Heart right ventricle (tissue), 16 donors: ENCODE measurements at regions of chr4 and their contacts with region 1.

Region 1: DNA sequence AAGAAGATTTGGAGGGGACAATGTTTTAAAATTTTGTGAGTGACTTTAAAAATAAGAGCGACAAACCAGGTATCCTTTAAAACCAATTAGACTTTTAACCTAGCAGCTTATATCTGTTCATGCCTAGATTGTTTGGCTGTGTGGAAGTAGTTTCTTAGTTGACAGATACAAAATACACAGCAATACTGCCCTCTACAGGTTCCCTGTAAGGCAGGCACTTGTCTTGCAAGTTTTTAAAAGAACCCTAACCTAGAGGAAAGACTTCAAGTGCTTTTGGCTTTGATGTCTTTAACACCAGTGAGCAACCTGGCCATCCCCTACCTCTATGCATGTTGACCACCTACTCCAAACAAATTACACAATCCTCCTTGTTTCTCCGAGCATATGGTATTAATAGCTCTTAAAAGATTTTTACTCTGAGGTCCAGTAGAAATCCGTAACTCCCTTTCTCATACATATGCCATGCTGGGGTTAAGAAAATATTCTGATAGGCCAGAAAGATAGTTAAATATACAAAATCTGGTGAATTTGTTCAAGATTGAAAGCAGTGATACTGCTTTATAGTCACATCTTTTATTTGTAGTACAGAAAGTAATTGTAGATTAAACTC is 273.0 kb downstream of the ARHGAP24 start:
- DNase-seq: peak in 1 of 2 donors; percentile 62
- ATAC-seq: peak; percentile 59 to 87 (median 80)
- H3K4me3 ChIP-seq: no peak overlapping the region
- H3K27ac ChIP-seq: no peak overlapping the region
- H3K4me1 ChIP-seq: peaks cover 0 to 34% (median 5%) of the 10 kb centered on the region in 9 donors
- H3K27me3 ChIP-seq: no peaks in the 10 kb centered on the region
- CTCF ChIP-seq: peak; percentile 82 to 93 (median 88)

Region 2: DNA sequence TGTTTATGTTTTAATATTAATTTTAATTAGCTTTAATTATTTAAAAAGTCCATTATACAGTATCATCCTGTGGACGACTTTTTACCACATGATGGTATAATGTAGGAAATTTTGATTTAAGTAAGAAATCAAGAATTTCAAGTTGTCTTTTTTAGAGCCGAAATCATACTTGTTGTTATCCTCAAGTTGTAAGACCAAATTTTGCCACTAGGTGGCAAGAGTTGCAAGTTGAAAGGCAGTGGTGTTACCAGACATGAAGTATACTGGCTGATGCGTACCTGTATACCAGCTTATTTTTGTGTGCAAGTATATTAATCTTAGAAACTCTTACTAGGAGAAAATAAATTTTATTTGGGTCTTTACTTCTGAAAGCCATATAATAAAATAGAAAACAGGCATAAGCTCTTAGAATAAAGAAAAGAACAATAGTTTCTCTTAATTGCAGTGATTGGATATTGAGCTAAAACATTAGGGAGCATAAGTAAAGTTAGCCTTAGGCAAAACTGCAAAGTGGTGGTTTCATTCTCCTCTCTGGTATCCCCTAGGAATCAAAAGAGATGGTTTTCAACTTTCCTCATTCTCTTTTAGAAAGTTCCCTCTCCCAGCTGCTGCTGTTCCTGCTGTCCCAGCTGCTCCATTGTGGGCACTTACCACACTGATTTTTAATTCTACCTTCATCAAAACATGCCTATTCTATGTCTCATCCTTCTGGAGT is 663.5 kb before region 1 on chr4:
- intact Hi-C with region 1: loop called in 7 of 10 experiments (anchors 2 to 10 kb)
- DNase-seq: peak in 1 of 2 donors; percentile 55
- ATAC-seq: peak in 4 of 8 donors; percentile 48 to 73 (median 59)
- H3K4me3 ChIP-seq: no peak overlapping the region
- H3K27ac ChIP-seq: no peak overlapping the region
- H3K4me1 ChIP-seq: peaks cover 0 to 6% (median 0%) of the 10 kb centered on the region in 9 donors
- H3K27me3 ChIP-seq: peaks cover 0 to 3% (median 0%) of the 10 kb centered on the region in 7 donors
- CTCF ChIP-seq: peak; percentile 52 to 85 (median 72)

Region 3: DNA sequence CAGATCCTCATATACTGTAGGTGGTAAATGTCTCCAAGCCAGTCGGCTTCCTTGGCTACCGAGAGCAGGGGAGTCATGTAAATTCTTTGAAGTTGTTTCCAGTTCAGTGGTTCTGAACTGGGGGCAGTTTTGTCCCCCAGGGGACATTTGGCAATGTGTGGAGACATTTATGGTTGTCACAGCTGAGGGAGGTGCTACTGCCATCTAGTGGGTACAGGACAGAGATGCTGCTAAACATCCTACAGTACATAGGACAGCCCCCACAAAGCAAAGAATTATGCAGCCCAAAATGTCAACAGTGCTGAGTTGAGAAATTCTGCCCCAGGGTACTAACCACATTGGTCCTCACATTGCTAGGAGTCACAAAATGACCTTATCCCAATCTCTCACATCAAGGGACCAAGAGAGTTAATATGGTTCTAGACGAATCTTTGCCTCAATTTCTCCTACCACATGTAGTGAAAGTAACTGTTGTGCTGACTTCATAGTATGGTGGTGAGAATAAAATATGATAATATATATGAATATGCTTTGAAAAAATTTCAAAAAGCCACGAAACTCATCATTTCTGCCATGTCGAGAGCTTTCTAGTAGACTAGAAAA is 377.5 kb before region 1 on chr4:
- intact Hi-C with region 1: loop called in 6 of 10 experiments (anchors 5 to 10 kb)
- DNase-seq: peak in 1 of 2 donors; percentile 49
- ATAC-seq: peak in 7 of 8 donors; percentile 57 to 86 (median 67)
- H3K4me3 ChIP-seq: no peak overlapping the region
- H3K27ac ChIP-seq: no peak overlapping the region
- H3K4me1 ChIP-seq: peaks cover 0 to 32% (median 13%) of the 10 kb centered on the region in 9 donors
- H3K27me3 ChIP-seq: no peaks in the 10 kb centered on the region
- CTCF ChIP-seq: peak; percentile 46 to 79 (median 71)

Region 4: GRCh38 chr4:85474818-85475630 is 273.0 kb before region 1 on chr4 and contains the start of gene ARHGAP24:
- intact Hi-C with region 1: loop called in 3 of 10 experiments (anchors 5 to 10 kb)
- DNase-seq: peak; percentile 82 to 83
- ATAC-seq: peak; percentile 95 to 99 (median 98)
- H3K4me3 ChIP-seq: peak within 1 kb of the TSS; percentile 26 to 82 (median 69)
- H3K27ac ChIP-seq: peak within 1 kb of the TSS; percentile 30 to 87 (median 84)
- H3K4me1 ChIP-seq: peaks cover 0 to 25% (median 8%) of the 10 kb centered on the region in 9 donors
- H3K27me3 ChIP-seq: no peaks in the 10 kb centered on the region
- CTCF ChIP-seq: peak in 2 of 9 donors; percentile 26 to 27
- total RNA-seq, gene ARHGAP24: 13.7 to 35.5 (median 25.0) TPM

Region 5: GRCh38 chr4:85498068-85498733 is 249.8 kb before region 1 on chr4:
- intact Hi-C with region 1: loop called in 2 of 10 experiments (anchors 5 to 10 kb)
- DNase-seq: no peak
- ATAC-seq: peak; percentile 60 to 88 (median 80)
- H3K4me3 ChIP-seq: no peak overlapping the region
- H3K27ac ChIP-seq: peak overlapping the region in 8 of 10 donors; percentile 34 to 77 (median 60)
- H3K4me1 ChIP-seq: peaks cover 8 to 52% (median 34%) of the 10 kb centered on the region in 9 donors
- H3K27me3 ChIP-seq: no peaks in the 10 kb centered on the region
- CTCF ChIP-seq: no peak

Region 6: DNA sequence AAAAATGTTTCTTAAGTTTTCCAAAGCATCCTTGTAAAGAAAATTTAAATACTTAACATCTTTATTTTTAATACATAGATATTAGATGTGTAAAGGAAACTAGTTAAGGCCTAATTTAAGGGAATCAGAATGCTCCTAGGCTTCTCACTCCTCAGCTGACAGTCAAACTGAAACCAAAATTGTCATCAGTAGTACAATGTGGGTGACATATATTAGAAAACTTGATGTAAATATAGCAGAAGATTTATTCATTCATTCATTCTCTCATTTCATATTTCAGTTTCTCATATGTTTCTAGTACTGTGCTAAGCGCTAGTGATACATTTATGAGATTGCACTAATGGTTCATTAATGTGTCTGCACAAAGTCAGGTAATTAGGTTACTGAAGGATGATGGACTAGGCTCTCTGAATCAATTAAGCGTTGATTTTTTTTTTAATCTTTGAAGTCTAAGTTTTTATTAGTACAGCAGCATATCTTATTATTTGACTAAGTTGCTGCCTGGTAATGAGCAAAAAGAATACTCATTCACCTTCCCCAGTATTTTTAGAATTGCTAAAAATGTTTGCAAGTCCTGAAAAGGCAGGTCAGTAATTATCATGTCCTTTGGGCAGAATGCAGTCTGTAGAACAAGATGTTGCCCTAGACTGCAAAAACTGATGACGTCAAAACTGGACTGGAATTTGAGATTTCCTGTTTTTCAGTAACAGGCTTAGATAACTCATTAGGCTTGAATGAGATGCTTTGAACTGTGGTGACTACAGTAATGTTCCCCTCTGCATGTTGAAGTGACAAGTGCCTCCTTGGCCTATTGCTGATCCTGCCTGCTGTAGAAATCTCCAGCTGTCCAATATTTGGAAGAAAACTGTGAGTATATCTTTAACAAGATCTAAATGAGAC is 144.3 kb before region 1 on chr4:
- intact Hi-C with region 1: loop called in 2 of 10 experiments (anchors 10 kb)
- DNase-seq: no peak
- ATAC-seq: peak in 5 of 8 donors; percentile 29 to 85 (median 51)
- H3K4me3 ChIP-seq: no peak overlapping the region
- H3K27ac ChIP-seq: peak overlapping the region in 1 of 10 donors; percentile 5
- H3K4me1 ChIP-seq: peaks cover 0 to 26% (median 11%) of the 10 kb centered on the region in 9 donors
- H3K27me3 ChIP-seq: no peaks in the 10 kb centered on the region
- CTCF ChIP-seq: no peak

Region 7: GRCh38 chr4:85968945-85969819 is 221.2 kb after region 1 on chr4:
- intact Hi-C with region 1: loop called in 4 of 10 experiments (anchors 5 to 10 kb)
- DNase-seq: no peak
- ATAC-seq: peak in 6 of 8 donors; percentile 55 to 68 (median 66)
- H3K4me3 ChIP-seq: no peak overlapping the region
- H3K27ac ChIP-seq: no peak overlapping the region
- H3K4me1 ChIP-seq: peaks cover 0 to 50% (median 26%) of the 10 kb centered on the region in 9 donors
- H3K27me3 ChIP-seq: no peaks in the 10 kb centered on the region
- CTCF ChIP-seq: peak; percentile 33 to 79 (median 66)